ENCODE measurements at regions of chr12 and their contacts with region 1.

Region 1: GRCh38 chr12:54958048-54958658 is 26.4 kb downstream of the TESPA1 start:
- DNase-seq: peak in 29 of 42 donors; percentile 21 to 83 (median 60)

Region 2: DNA sequence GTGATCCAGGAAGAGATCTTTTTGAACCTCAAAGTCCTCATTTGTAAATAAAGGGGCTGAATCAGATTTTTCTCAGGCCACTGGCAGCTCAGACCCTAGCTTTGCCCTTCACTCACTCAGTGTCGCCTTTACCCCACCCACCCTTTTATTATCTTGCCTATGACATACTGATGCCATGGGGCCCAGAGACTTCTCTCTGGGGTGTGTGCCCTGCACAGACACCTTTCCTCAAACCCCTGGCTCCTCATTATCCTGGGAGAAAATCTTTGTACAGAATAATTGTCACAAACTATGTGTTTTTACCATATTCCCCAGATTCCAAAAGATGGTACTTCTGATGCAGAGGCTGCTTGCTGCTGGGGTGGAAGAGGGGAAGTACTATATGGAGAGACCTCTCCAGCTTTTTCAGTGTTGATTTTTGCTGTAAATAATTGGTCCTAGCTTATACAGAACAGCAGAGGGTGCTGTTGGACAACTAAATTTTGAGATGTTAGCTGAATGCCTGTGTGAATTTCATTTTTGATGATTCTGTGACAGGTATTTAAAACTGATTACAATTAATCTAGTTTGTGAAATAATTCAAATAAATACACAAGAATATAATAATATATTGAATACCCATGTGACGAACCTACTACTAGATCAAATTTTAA is 256.1 kb before region 1 on chr12:
- intact Hi-C with region 1: loop called (anchors 5 kb)
- DNase-seq: peak in 10 of 42 donors; percentile 4 to 61 (median 26)

Region 3: GRCh38 chr12:54751493-54751892 is 206.7 kb before region 1 on chr12:
- intact Hi-C with region 1: loop called (anchors 5 kb)
- DNase-seq: no peak

Region 4: DNA sequence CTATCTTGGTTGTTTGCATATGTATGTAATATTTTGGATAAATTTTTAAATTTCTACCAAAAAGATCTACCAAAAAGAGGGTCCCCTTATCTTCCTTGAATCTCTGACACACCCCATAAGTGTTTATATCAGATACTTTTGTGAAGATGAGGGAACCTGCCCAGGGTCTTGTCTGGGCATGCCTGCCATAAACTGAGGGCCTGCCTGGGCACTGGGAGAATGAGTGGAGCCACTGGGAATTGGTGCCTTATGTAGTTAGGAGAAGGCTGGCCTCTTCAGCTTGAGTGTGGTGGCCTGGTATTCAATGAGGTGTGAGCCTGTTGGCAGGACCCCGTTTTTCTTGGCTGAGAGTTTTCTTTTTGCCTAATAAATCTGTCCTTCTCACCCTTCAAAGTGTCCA is 214.5 kb after region 1 on chr12:
- intact Hi-C with region 1: no loop called
- DNase-seq: no peak

Measured in head of caudate nucleus (tissue), 42 donors.